Left colon (tissue), 2 donors: ENCODE measurements at regions of chr6 and their contacts with region 1.

Region 1: GRCh38 chr6:70566751-70567382 is at the start of gene SDHAF4:
- DNase-seq: peak; percentile 92 to 95
- ATAC-seq: peak; percentile 99
- total RNA-seq, gene SDHAF4: 9.1 to 9.7 TPM

Region 2: GRCh38 chr6:70686548-70687133 is 119.8 kb after region 1 on chr6:
- intact Hi-C with region 1: loop called in 1 of 2 experiments (anchors 10 kb)
- DNase-seq: no peak
- ATAC-seq: peak; percentile 49

Region 3: GRCh38 chr6:70884074-70884983 is 317.5 kb after region 1 on chr6:
- intact Hi-C with region 1: no loop called
- DNase-seq: peak in 1 of 2 donors; percentile 43
- ATAC-seq: peak; percentile 65

Region 4: GRCh38 chr6:70905742-70906141 is 338.9 kb after region 1 on chr6:
- intact Hi-C with region 1: no loop called
- DNase-seq: no peak
- ATAC-seq: no peak

Region 5: DNA sequence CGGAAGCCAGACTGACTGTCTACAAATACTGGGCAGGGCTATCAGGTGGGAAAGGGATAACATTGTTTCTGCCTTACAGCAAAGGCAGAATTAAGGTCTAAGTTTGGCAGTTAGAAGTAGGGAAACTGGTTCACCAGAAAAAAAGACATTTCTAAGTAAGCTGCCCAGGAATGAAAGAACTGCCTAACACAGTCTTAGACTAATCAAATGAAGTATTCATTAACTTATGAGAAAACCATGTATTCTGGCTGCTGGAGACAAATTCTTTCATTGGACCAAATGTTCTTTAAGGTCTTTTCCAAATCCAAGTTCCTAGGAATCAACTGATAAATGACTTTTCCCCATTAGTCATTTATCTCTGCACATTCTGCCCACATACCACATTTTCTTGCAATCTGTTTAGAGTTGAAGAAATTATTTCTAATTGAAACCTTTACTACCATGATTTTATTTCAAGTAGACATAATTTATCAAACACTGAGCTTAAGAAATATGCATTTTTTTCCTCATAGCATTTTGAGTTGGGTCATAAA is 601.4 kb after region 1 on chr6:
- intact Hi-C with region 1: no loop called
- DNase-seq: no peak
- ATAC-seq: no peak